Endothelial cell of umbilical vein (primary cell): ENCODE measurements at regions of chr19 and their contacts with region 1.

Region 1: GRCh38 chr19:4557971-4558941 is 1.2 kb downstream of the SEMA6B start:
- DNase-seq: peak; percentile 61
- H3K4me3 ChIP-seq: peak overlapping the region in 2 of 3 experiments; percentile 37 to 76
- H3K27ac ChIP-seq: peak overlapping the region; percentile 77
- H3K4me1 ChIP-seq: peaks cover 26% of the 10 kb centered on the region
- H3K27me3 ChIP-seq: no peaks in the 10 kb centered on the region
- CTCF ChIP-seq: peak; percentile 91 to 93
- POLR2A ChIP-seq: no peak

Region 2: DNA sequence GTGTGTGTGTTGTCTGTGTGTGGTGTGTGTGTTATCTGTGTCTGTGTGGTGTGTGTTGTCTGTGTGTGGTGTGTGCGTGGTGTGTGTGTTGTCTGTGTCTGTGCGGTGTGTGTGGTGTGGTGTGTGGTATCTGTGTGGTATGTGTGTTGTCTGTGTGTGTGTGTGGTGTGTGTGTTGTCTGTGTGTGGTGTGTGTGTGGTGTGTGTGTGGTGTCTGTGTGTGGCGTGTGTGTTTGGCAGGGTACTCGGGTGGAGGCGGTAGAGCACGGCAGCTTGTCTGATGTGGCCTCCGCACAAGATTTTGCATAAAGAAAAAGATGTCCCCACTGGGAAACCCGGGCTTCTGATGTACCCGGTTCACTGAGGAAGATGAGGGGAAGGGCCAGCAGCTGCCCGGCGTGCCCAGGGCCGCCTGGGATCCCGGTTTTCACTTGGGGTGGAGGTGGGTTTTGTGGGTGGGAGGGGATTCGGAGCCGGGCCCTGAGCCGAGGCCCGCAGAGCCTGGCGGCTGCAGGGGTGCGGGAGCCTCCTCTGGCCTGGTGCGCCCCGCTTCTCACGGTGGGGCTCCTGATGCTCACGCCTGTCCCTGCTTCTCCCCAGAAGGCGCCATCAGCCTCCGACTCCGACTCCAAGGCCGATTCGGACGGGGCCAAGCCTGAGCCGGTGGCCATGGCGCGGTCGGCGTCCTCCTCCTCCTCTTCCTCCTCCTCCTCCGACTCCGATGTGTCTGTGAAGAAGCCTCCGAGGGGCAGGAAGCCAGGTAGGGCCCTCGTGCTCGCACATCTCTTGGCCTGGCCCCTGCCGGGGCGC is 64.9 kb before region 1 on chr19:
- CTCF ChIA-PET with region 1: no interaction called
- POLR2A ChIA-PET with region 1: no interaction called
- dilution Hi-C with region 1: no loop called
- intact Hi-C with region 1: no loop called
- DNase-seq: no peak
- H3K4me3 ChIP-seq: no peak overlapping the region
- H3K27ac ChIP-seq: no peak overlapping the region
- H3K4me1 ChIP-seq: no peaks in the 10 kb centered on the region
- H3K27me3 ChIP-seq: no peaks in the 10 kb centered on the region
- CTCF ChIP-seq: no peak
- POLR2A ChIP-seq: no peak

Region 3: DNA sequence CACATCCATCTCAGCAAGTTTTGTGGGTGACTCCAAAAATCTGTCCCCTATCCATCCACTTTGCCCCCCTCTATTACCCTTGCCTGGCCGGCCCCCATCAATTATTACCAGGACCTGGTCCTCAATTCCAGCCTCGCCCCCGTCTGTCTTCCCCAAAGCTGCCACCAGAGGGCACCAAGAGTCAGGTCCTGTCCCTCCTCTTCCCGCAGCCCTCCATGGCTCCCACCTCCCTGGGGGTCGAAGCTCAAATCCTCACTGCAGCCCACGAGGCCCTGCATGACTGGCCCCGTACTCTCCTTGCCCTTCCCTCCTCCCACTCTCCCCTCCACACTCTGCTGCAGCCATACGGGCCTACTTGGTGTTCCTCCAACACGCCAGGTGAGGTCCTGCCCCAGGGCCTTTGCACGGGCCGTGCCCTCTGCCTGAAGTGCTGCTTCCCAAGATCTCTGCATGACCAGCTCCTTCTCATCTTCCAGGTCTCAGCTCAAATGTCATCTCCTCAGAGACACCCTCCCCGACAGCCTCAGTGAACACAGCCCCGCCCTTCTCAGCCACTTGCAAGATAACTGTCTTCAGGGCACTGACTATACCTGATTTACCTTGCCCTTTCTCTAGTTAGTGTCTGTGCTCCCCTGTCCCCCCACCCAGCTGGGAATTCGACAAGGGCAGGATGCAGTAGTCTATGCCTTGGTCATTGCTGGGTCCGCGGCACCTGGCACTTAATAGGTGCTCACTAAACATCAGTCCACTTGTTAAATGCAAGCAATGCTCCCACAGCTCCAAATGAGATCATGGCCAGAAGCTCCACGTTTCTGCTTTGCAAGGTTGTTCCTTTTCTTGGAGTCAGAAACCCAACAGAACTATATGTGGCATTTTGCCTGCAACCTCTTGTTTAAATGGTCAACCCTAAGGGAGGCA is 18.0 kb after region 1 on chr19:
- CTCF ChIA-PET with region 1: interaction called, 25 read pairs
- POLR2A ChIA-PET with region 1: no interaction called
- dilution Hi-C with region 1: no loop called
- intact Hi-C with region 1: loop called (anchors 1 kb)
- DNase-seq: peak; percentile 72
- H3K4me3 ChIP-seq: no peak overlapping the region
- H3K27ac ChIP-seq: peak overlapping the region; percentile 99
- H3K4me1 ChIP-seq: peaks cover 24% of the 10 kb centered on the region
- H3K27me3 ChIP-seq: no peaks in the 10 kb centered on the region
- CTCF ChIP-seq: peak; percentile 82
- POLR2A ChIP-seq: no peak

Region 4: DNA sequence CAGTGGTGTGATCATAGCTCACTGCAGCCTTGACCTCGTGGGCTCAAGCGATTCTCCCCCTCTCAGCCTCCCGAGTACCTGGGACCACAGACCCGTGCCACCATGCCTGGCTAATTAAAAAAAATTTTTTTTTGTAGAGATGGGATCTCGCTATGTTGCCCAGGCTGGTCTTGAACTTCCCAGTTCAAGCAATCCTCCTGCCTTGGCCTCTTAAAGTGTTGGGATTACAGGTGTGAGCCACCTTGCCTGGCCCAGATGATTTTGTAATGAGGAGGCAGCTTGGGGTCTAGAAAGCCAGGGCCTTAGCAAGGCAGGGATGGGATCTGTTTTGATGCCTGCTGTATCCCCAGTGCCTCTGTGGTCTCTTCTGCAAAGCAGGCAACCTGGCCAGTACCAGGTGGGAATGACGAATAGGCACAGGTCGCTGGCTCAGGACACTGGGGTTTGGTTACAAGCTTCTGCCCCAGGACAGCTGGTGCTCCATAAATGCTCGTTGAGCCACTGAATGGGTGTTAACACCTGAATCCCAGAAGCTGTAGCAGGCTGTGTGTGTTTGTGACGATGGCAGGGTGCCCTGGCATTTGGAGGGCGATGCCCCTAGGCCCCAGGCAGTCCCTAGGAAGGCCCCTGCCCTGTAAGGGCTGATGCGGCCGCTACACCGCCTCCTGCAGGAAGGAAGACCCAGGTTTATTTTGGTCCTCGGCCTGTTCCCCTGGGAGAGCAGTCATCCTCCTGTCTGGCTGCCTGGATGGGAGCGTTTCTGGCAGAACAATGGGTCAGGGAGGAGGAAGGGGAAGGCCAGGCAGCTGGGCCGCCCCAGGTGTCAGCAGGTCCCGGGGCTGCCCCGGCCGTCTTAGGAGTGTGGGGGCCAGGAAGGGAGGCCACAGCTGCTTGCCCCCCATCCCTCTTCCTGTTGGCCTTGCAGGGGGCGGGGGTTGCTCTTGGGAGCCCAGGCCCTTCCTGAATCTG is 89.7 kb after region 1 on chr19:
- CTCF ChIA-PET with region 1: interaction called, 10 read pairs
- POLR2A ChIA-PET with region 1: no interaction called
- dilution Hi-C with region 1: no loop called
- intact Hi-C with region 1: no loop called
- DNase-seq: peak; percentile 90
- H3K4me3 ChIP-seq: no peak overlapping the region
- H3K27ac ChIP-seq: peak overlapping the region; percentile 47
- H3K4me1 ChIP-seq: peaks cover 23% of the 10 kb centered on the region
- H3K27me3 ChIP-seq: no peaks in the 10 kb centered on the region
- CTCF ChIP-seq: peak; percentile 32 to 33
- POLR2A ChIP-seq: peak; percentile 35

Region 5: DNA sequence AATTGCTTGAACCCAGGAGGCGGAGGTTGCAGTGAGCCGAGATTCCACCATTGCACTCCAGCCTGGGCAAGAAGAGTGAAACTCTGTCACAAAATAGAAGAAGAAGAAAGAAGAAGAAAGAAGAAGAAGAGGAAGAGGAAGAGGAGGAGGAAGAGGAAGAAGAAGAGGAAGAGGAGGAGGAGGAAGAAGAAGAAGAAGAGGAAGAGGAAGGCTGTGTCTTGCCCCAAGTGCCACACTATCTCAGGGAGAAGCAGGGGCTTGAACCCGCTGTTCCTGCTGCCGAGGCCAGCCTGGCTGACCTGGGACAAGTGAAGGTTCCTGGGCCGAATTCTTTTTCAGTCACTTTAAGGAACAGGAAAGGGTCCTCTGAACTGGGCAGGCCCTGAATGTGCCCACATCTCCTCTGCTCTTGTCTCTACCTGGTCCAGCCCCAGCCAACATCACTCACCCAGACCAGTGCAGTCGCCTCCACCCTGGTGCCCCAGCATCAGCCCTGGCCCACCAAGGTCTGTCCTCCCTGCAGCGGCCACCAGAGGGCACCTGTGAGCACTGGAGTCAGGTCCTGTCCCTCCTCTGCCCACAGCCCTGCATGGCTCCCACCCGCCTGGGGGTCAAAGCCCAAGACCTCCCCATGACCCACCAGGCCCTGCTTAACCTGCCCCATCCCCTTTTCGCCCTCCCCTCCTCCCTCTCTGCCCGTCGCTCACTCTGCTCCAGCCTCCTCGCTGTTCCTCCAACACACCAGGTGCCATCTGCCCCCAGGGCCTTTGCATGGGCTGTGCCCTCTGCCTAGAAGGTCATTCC is 253.3 kb after region 1 on chr19:
- CTCF ChIA-PET with region 1: no interaction called
- POLR2A ChIA-PET with region 1: no interaction called
- dilution Hi-C with region 1: no loop called
- intact Hi-C with region 1: no loop called
- DNase-seq: peak; percentile 68
- H3K4me3 ChIP-seq: no peak overlapping the region
- H3K27ac ChIP-seq: peak overlapping the region; percentile 92
- H3K4me1 ChIP-seq: peaks cover 5% of the 10 kb centered on the region
- H3K27me3 ChIP-seq: no peaks in the 10 kb centered on the region
- CTCF ChIP-seq: peak; percentile 89 to 96
- POLR2A ChIP-seq: no peak